SK-N-SH (cell line): ENCODE measurements at regions of chr7 and their contacts with region 1.

Region 1: GRCh38 chr7:30091491-30091912 is 43.3 kb upstream of the MTURN start:
- DNase-seq: no peak
- H3K4me3 ChIP-seq: no peak overlapping the region
- H3K27ac ChIP-seq: peak overlapping the region in 1 of 2 experiments; percentile 74; a peak in 3 of 4 replicates
- H3K4me1 ChIP-seq: peaks cover 0 to 8% of the 10 kb centered on the region in 2 experiments; a peak in 2 of 4 replicates
- H3K27me3 ChIP-seq: no peaks in the 10 kb centered on the region
- CTCF ChIP-seq: no peak
- EP300 ChIP-seq: 0 out of 4 replicates have a peak, but pooled peaks of 1 of the 2 experiments have one; percentile 45
- RAD21 ChIP-seq: no peak

Region 2: DNA sequence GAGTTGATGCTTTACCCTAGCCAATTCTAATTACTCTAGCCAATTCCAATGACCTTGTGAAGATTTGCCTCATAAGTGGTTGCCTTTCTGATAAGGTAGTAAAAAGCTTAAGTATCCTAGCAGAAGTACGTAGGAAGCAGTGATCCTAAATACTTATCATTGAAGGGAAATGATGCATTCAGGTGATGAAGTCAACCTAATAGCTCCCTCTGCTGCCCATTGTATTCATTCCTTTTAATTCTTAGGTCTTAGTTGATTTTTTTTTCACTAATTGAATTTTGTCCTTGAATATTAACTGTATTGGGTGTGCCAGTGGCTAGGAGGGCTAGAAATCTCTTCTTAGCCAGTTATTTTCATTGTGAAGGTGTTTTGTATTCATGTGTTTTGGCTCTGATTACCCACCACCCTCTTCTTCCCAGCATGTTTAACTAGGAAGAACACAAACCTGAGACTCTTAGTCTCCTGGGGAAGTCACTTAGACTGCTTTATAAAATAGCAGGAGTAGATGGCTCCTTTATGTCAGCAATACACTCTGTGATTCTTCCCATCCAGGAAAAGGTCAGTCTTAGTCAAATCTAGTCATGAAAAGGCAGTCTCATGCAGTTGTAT is 17.0 kb before region 1 on chr7:
- CTCF ChIA-PET with region 1: interaction called, 28 read pairs
- POLR2A ChIA-PET with region 1: no interaction called
- DNase-seq: peak; percentile 32
- H3K4me3 ChIP-seq: no peak overlapping the region
- H3K27ac ChIP-seq: no peak overlapping the region
- H3K4me1 ChIP-seq: no peaks in the 10 kb centered on the region
- H3K27me3 ChIP-seq: no peaks in the 10 kb centered on the region
- CTCF ChIP-seq: peak; percentile 75
- EP300 ChIP-seq: no peak
- RAD21 ChIP-seq: peak; percentile 64